ENCODE measurements at regions of chr1 and their contacts with region 1.

Region 1: DNA sequence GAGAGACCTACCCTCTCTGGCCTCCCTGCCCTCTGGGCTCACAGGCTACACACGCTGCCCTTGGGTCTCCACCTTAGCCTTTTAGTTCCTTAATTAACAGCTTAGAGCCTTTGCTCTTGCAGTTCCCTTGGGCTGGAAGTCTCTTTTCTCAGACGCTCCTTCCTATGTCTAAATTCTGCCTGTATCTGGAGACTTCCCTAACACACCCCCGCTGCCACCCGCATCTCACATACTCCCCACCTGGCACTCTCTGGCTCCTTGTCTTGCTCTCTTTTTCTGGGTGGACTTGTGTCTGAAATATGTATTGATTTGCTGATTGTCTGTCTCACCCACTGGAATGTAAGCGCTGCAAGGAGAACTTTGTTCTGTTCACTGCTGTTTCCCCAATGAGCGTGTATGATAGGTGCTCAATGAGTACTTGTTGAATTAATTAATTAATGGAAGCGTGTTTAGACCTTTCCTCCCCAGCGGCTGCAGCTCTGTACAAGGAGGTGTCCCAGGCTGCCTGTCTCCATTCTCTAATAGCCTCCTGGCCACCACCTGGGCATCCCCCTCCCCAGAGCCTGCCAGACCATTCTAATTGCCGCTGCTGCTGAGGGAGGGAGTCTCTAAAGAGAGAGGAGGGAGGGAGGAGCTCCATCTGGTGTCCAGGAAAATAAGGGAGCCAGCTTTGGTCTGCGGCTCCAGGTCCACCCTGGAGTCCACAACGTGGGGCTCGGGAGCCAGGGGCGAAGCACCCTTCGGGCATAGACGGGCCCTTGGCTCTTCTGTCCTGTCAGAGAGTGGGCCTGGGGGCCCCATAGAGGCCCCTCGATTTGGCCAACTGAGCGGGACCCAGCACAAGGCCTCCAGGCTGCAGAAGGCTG is 95.4 kb downstream of the RNF220 start:
- DNase-seq: no peak
- ATAC-seq: peak in 1 of 4 donors; percentile 42
- H3K4me3 ChIP-seq: no peak overlapping the region
- H3K27ac ChIP-seq: no peak overlapping the region
- H3K4me1 ChIP-seq: no peaks in the 10 kb centered on the region
- H3K27me3 ChIP-seq: peaks cover 0 to 28% (median 1%) of the 10 kb centered on the region in 3 donors
- CTCF ChIP-seq: peak; percentile 24

Region 2: DNA sequence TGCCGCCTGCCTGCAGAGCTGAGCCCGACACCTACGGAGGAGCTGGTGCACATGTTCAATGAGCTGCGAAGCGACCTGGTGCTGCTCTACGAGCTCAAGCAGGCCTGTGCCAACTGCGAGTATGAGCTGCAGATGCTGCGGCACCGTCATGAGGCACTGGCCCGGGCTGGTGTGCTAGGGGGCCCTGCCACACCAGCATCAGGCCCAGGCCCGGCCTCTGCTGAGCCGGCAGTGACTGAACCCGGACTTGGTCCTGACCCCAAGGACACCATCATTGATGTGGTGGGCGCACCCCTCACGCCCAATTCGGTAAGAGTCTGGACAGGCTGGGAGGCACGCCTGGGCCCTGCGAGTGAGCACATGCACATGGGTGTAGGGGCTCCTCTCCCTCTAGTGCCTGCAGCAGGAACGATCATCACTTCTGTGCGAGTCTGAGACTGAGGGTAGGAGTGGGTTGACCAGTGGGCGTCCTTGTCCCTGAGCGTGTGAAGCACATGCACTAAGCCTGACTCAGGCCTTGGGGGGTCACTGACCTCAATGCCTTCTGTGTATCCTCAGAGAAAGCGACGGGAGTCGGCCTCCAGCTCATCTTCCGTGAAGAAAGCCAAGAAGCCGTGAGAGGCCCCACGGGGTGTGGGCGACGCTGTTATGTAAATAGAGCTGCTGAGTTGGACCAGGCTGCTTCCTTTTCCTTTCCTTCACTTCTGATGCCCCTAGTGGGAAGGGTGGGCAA is 280.2 kb before region 1 on chr1:
- intact Hi-C with region 1: loop called in 1 of 2 experiments (anchors 10 kb)
- DNase-seq: no peak
- ATAC-seq: no peak
- H3K4me3 ChIP-seq: no peak overlapping the region
- H3K27ac ChIP-seq: no peak overlapping the region
- H3K4me1 ChIP-seq: no peaks in the 10 kb centered on the region
- H3K27me3 ChIP-seq: no peaks in the 10 kb centered on the region
- CTCF ChIP-seq: no peak

Region 3: DNA sequence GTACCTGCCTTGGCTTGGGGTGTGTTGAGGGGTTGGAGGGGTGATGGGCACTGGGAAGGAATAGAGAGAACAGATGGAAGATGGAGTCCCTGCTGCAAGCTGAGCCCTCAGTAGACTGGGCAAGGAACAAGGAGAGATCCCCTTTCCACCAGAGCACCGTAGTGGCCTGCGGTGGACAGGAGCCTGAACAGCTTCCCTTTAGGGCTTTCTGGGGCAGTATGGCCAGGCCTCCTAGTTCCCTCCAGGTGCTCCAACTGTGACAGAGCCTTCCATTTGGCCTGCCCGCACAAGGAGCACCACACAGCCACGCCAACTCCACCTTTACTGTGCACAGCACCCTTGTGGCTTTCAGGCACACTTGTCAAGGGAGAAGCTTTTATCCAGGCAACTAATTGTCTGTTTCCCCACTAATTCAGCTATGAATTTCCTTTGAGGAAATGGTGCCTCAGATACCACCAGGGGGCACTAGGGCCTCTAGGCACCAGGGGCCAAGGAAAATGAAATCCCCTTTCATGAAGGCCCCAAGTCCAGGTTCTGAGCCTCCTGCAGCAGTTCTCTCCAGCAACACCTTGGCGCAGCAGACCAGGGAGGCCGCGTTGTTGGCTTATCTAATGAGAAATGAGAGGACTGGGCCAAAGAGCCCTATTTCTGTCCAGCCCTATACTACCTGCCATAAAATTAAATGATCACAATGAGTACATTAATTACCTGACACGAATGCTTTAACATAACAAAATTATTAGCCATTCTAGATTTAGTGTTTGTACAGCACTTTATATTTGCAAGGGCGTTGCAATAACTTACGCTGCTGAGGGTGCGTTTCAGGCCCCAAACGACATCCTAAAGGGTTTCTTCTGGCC is 122.3 kb before region 1 on chr1:
- intact Hi-C with region 1: loop called in 1 of 2 experiments (anchors 2 kb)
- DNase-seq: peak in 1 of 2 donors; percentile 28
- ATAC-seq: no peak
- H3K4me3 ChIP-seq: no peak overlapping the region
- H3K27ac ChIP-seq: no peak overlapping the region
- H3K4me1 ChIP-seq: no peaks in the 10 kb centered on the region
- H3K27me3 ChIP-seq: no peaks in the 10 kb centered on the region
- CTCF ChIP-seq: peak; percentile 54

Region 4: GRCh38 chr1:44405041-44405797 is 95.2 kb before region 1 on chr1 and contains the start of gene RNF220:
- intact Hi-C with region 1: loop called in 1 of 2 experiments (anchors 5 kb)
- DNase-seq: peak; percentile 26 to 62
- ATAC-seq: peak in 3 of 4 donors; percentile 54 to 66 (median 62)
- H3K4me3 ChIP-seq: peak within 1 kb of the TSS; percentile 64
- H3K27ac ChIP-seq: peak within 1 kb of the TSS; percentile 30
- H3K4me1 ChIP-seq: peaks cover 25% of the 10 kb centered on the region
- H3K27me3 ChIP-seq: peaks cover 8 to 99% (median 41%) of the 10 kb centered on the region in 3 donors
- CTCF ChIP-seq: no peak
- total RNA-seq, gene RNF220: 61.1 to 91.9 (median 69.0) TPM